Transverse colon (tissue), 4 donors: ENCODE measurements at regions of chr7 and their contacts with region 1.

Region 1: GRCh38 chr7:89958525-89959068 is 195.7 kb upstream of the STEAP1 start:
- DNase-seq: no peak
- H3K4me3 ChIP-seq: no peak overlapping the region
- H3K27ac ChIP-seq: no peak overlapping the region
- H3K4me1 ChIP-seq: no peaks in the 10 kb centered on the region
- H3K27me3 ChIP-seq: no peaks in the 10 kb centered on the region
- CTCF ChIP-seq: no peak
- EP300 ChIP-seq: no peak
- POLR2A ChIP-seq: no peak

Region 2: GRCh38 chr7:89943525-89944050 is 15.0 kb before region 1 on chr7:
- in situ Hi-C with region 1: no loop called
- intact Hi-C with region 1: loop called (anchors 1 kb)
- DNase-seq: no peak
- H3K4me3 ChIP-seq: no peak overlapping the region
- H3K27ac ChIP-seq: no peak overlapping the region
- H3K4me1 ChIP-seq: no peaks in the 10 kb centered on the region
- H3K27me3 ChIP-seq: no peaks in the 10 kb centered on the region
- CTCF ChIP-seq: no peak
- EP300 ChIP-seq: no peak
- POLR2A ChIP-seq: no peak